ENCODE measurements at regions of chr5 and their contacts with region 1.

Region 1: DNA sequence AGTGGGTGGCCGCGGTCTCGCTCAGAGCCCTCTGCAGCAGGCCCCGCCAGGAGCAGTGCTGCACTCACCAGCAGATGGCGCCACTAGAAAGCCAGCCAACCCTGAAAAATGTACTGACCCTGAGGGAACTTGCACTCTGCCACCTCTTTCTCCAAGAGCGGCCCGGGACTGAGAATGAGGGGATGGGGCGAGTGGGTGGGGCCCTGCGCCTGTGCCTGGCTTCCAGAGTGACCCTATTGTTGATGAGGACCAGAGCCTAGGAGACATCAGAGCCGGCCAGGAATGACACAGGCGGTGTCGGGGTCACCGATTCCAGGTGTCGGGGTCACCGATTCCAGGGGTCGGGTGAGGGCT is 2.9 kb upstream of the IL17B start:
- DNase-seq: no peak
- H3K4me3 ChIP-seq: peak overlapping the region in 3 of 4 donors; percentile 18 to 47 (median 25)
- H3K27ac ChIP-seq: peak overlapping the region; percentile 71 to 91 (median 84)
- H3K4me1 ChIP-seq: peaks cover 9 to 74% (median 30%) of the 10 kb centered on the region in 3 donors
- H3K27me3 ChIP-seq: no peaks in the 10 kb centered on the region
- CTCF ChIP-seq: peak; percentile 87 to 97 (median 92)
- POLR2A ChIP-seq: no peak

Region 2: GRCh38 chr5:149434162-149435014 is 52.4 kb after region 1 on chr5:
- intact Hi-C with region 1: loop called (anchors 5 kb)
- DNase-seq: no peak
- H3K4me3 ChIP-seq: no peak overlapping the region
- H3K27ac ChIP-seq: peak overlapping the region in 3 of 4 donors; percentile 1 to 90 (median 89)
- H3K4me1 ChIP-seq: peaks cover 5 to 64% (median 31%) of the 10 kb centered on the region in 3 donors
- H3K27me3 ChIP-seq: no peaks in the 10 kb centered on the region
- CTCF ChIP-seq: peak; percentile 48 to 86 (median 76)
- POLR2A ChIP-seq: no peak